H1 (cell line): ENCODE measurements at regions of chr20 and their contacts with region 1.

Region 1: GRCh38 chr20:64119681-64120341 is 12.4 kb upstream of the NPBWR2 start:
- DNase-seq: peak in 1 of 2 experiments; percentile 49
- H3K4me3 ChIP-seq: no peak overlapping the region
- H3K27ac ChIP-seq: no peak overlapping the region
- H3K4me1 ChIP-seq: no peaks in the 10 kb centered on the region; a peak in 2 of 7 replicates
- H3K27me3 ChIP-seq: no peaks in the 10 kb centered on the region; a peak in 2 of 7 replicates
- CTCF ChIP-seq: no peak
- EP300 ChIP-seq: no peak
- POLR2A ChIP-seq: no peak
- RAD21 ChIP-seq: no peak

Region 2: DNA sequence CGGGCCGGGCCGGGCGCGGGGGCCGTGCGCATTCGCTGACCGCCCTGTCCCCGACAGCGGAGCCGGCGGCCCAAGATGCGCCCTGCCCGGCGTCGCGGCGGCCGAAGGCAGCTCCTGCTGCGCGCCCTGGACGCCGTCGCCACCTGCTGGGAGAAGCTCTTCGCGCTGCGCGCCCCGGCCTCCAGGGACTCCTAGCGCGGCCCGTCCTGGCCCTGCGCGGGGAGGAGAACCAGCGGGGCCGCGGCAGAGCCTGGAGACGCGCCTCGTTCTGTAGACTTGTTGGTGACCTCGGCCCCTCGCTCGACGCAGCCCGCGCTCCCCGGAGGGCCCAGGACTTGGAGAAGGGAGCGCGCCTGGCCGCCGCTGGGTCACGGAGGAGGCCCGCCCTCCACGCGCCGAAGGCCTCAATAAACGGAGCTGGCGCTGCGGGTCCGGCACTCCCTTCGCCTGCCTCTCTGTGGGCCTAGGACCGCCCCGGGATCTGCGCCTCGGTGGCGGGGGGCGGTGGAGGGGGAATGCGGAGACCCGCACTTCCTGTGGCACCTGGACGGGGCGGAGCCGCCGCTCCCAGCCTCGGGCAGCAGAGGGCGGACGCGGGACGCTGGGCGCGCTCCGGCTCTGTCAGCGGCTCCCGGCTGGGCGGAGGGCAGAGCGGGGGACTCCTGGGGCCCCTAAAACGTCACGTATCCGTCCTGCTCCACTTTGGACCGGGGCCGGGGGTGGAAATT is 81.1 kb before region 1 on chr20:
- CTCF ChIA-PET with region 1: interaction called, 32 read pairs
- POLR2A ChIA-PET with region 1: interaction called, 3 read pairs
- DNase-seq: peak in 1 of 2 experiments; percentile 92
- H3K4me3 ChIP-seq: peak overlapping the region; percentile 35 to 73 (median 48)
- H3K27ac ChIP-seq: no peak overlapping the region
- H3K4me1 ChIP-seq: peaks cover 0 to 23% (median 17%) of the 10 kb centered on the region in 4 experiments; a peak in 6 of 7 replicates
- H3K27me3 ChIP-seq: peaks cover 16 to 56% (median 47%) of the 10 kb centered on the region in 4 experiments
- CTCF ChIP-seq: peak; percentile 73 to 87 (median 84)
- EP300 ChIP-seq: no peak
- POLR2A ChIP-seq: no peak
- RAD21 ChIP-seq: peak; percentile 66 to 82

Region 3: GRCh38 chr20:64079273-64080012 is 40.4 kb before region 1 on chr20 and contains the start of gene RGS19:
- CTCF ChIA-PET with region 1: interaction called, 144 read pairs
- POLR2A ChIA-PET with region 1: interaction called, 3 read pairs
- DNase-seq: peak in 1 of 2 experiments; percentile 86
- H3K4me3 ChIP-seq: peak within 1 kb of the TSS; percentile 60 to 92 (median 71)
- H3K27ac ChIP-seq: no peak within 1 kb of the TSS; the same call in 1 of the 2 replicates
- H3K4me1 ChIP-seq: peaks cover 0 to 35% (median 18%) of the 10 kb centered on the region in 4 experiments; a peak in 6 of 7 replicates
- H3K27me3 ChIP-seq: peaks cover 2 to 36% (median 29%) of the 10 kb centered on the region in 4 experiments
- CTCF ChIP-seq: no peak
- EP300 ChIP-seq: no peak
- POLR2A ChIP-seq: no peak
- RAD21 ChIP-seq: no peak
- total RNA-seq, gene RGS19: 12.7 and 13.1 TPM in 2 replicates

Region 4: GRCh38 chr20:64106981-64107735 is 12.7 kb before region 1 on chr20 and contains the start of gene NPBWR2:
- CTCF ChIA-PET with region 1: interaction called, 59 read pairs
- POLR2A ChIA-PET with region 1: no interaction called
- DNase-seq: peak in 1 of 2 experiments; percentile 44
- H3K4me3 ChIP-seq: no peak within 1 kb of the TSS
- H3K27ac ChIP-seq: no peak within 1 kb of the TSS; the same call in 1 of the 2 replicates
- H3K4me1 ChIP-seq: peaks cover 0 to 8% (median 3%) of the 10 kb centered on the region in 4 experiments; a peak in 3 of 7 replicates
- H3K27me3 ChIP-seq: peaks cover 2 to 10% (median 9%) of the 10 kb centered on the region in 4 experiments
- CTCF ChIP-seq: no peak
- EP300 ChIP-seq: no peak
- POLR2A ChIP-seq: no peak
- RAD21 ChIP-seq: no peak
- total RNA-seq, gene NPBWR2: not detected in 2 replicates